CD4-positive, alpha-beta T cell (primary cell): ENCODE measurements at regions of chr13 and their contacts with region 1.

Region 1: GRCh38 chr13:24141333-24141910 is 19.1 kb upstream of the SPATA13 start:
- DNase-seq: no peak
- ATAC-seq: no peak
- H3K4me3 ChIP-seq: no peak overlapping the region
- H3K4me3 Mint-ChIP-seq: no peak overlapping the region
- H3K27ac ChIP-seq: no peak overlapping the region
- H3K27ac Mint-ChIP-seq: no peak overlapping the region
- H3K4me1 ChIP-seq: no peaks in the 10 kb centered on the region
- H3K4me1 Mint-ChIP-seq: no peaks in the 10 kb centered on the region
- H3K27me3 ChIP-seq: no peaks in the 10 kb centered on the region
- H3K27me3 Mint-ChIP-seq: no peaks in the 10 kb centered on the region
- CTCF ChIP-seq: no peak

Region 2: GRCh38 chr13:24187185-24187584 is 45.8 kb after region 1 on chr13:
- CTCF ChIA-PET with region 1: no interaction called
- POLR2A ChIA-PET with region 1: no interaction called
- intact Hi-C with region 1: loop called in 1 of 2 experiments (anchors 5 kb)
- DNase-seq: peak in 3 of 14 experiments; percentile 14 to 50 (median 17)
- ATAC-seq: no peak
- H3K4me3 ChIP-seq: no peak overlapping the region
- H3K4me3 Mint-ChIP-seq: no peak overlapping the region
- H3K27ac ChIP-seq: no peak overlapping the region
- H3K27ac Mint-ChIP-seq: no peak overlapping the region
- H3K4me1 ChIP-seq: peaks cover 3% of the 10 kb centered on the region
- H3K4me1 Mint-ChIP-seq: peaks cover 8% of the 10 kb centered on the region
- H3K27me3 ChIP-seq: no peaks in the 10 kb centered on the region
- H3K27me3 Mint-ChIP-seq: no peaks in the 10 kb centered on the region
- CTCF ChIP-seq: no peak